CD8-positive, alpha-beta T cell (primary cell): ENCODE measurements at regions of chr15 and their contacts with region 1.

Region 1: DNA sequence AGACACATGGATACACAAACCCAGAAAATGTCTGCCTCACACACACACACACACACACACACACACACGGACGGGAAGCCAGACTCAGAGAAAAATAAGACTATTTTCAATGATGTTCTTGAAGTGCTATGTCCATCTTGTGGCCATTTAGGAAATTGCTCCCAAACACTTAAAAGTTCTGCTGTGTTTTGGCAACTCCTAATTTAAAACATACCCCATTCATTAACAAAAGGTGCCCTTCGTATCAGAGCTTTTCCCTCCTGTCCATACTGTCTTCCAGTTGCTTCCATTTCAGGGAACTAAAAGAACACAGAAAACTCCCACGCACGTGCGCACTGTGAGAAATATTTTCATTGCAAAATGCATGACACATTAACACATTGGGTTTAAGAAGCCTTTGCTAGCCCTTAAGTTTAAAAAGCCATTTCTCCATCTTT is 44.6 kb downstream of the SLC12A1 start:
- DNase-seq: peak in 2 of 9 experiments; percentile 26 to 34
- ATAC-seq: no peak
- H3K4me3 ChIP-seq: no peak overlapping the region
- H3K4me3 Mint-ChIP-seq: no peak overlapping the region
- H3K27ac ChIP-seq: no peak overlapping the region
- H3K27ac Mint-ChIP-seq: no peak overlapping the region
- H3K4me1 ChIP-seq: no peaks in the 10 kb centered on the region
- H3K4me1 Mint-ChIP-seq: no peaks in the 10 kb centered on the region
- H3K27me3 ChIP-seq: no peaks in the 10 kb centered on the region
- H3K27me3 Mint-ChIP-seq: peaks cover 17% of the 10 kb centered on the region
- CTCF ChIP-seq: peak; percentile 29

Region 2: GRCh38 chr15:48112242-48112641 is 138.4 kb before region 1 on chr15:
- CTCF ChIA-PET with region 1: no interaction called
- POLR2A ChIA-PET with region 1: no interaction called
- intact Hi-C with region 1: loop called in 1 of 2 experiments (anchors 10 kb)
- DNase-seq: peak in 1 of 9 experiments; percentile 1
- ATAC-seq: no peak
- H3K4me3 ChIP-seq: no peak overlapping the region
- H3K4me3 Mint-ChIP-seq: no peak overlapping the region
- H3K27ac ChIP-seq: no peak overlapping the region
- H3K27ac Mint-ChIP-seq: no peak overlapping the region
- H3K4me1 ChIP-seq: no peaks in the 10 kb centered on the region
- H3K4me1 Mint-ChIP-seq: no peaks in the 10 kb centered on the region
- H3K27me3 ChIP-seq: no peaks in the 10 kb centered on the region
- H3K27me3 Mint-ChIP-seq: peaks cover 22% of the 10 kb centered on the region
- CTCF ChIP-seq: no peak

Region 3: GRCh38 chr15:49610161-49610918 is 1359.7 kb after region 1 on chr15:
- CTCF ChIA-PET with region 1: no interaction called
- POLR2A ChIA-PET with region 1: no interaction called
- intact Hi-C with region 1: no loop called
- DNase-seq: no peak
- ATAC-seq: no peak
- H3K4me3 ChIP-seq: no peak overlapping the region
- H3K4me3 Mint-ChIP-seq: no peak overlapping the region
- H3K27ac ChIP-seq: no peak overlapping the region
- H3K27ac Mint-ChIP-seq: no peak overlapping the region
- H3K4me1 ChIP-seq: no peaks in the 10 kb centered on the region
- H3K4me1 Mint-ChIP-seq: no peaks in the 10 kb centered on the region
- H3K27me3 ChIP-seq: no peaks in the 10 kb centered on the region
- H3K27me3 Mint-ChIP-seq: no peaks in the 10 kb centered on the region
- CTCF ChIP-seq: no peak